Activated CD8-positive, alpha-beta T cell treated with anti-CD3 and anti-CD28 coated beads, Interleukin-2, amount 10 ng/mL, durations not matched to agents 7 days and 5 days (primary cell): ENCODE measurements at regions of chr14 and their contacts with region 1.

Region 1: GRCh38 chr14:76941946-76942805 is 86.3 kb downstream of the IRF2BPL start:
- DNase-seq: no peak
- ATAC-seq: no peak
- H3K4me3 Mint-ChIP-seq: no peak overlapping the region
- H3K27ac Mint-ChIP-seq: peak overlapping the region; percentile 28
- H3K4me1 Mint-ChIP-seq: peaks cover 23% of the 10 kb centered on the region
- H3K27me3 Mint-ChIP-seq: no peaks in the 10 kb centered on the region

Region 2: GRCh38 chr14:76929927-76930326 is 12.2 kb before region 1 on chr14:
- CTCF ChIA-PET with region 1: interaction called, 10 read pairs
- POLR2A ChIA-PET with region 1: interaction called, 6 read pairs
- DNase-seq: peak; percentile 82
- ATAC-seq: peak; percentile 70
- H3K4me3 Mint-ChIP-seq: peak overlapping the region; percentile 48
- H3K27ac Mint-ChIP-seq: peak overlapping the region; percentile 82
- H3K4me1 Mint-ChIP-seq: peaks cover 79% of the 10 kb centered on the region
- H3K27me3 Mint-ChIP-seq: no peaks in the 10 kb centered on the region